ENCODE measurements at regions of chr9 and their contacts with region 1.

Region 1: GRCh38 chr9:121992571-121993212 is 100.4 kb downstream of the TTLL11 start:
- DNase-seq: peak; percentile 43 to 55
- H3K4me3 ChIP-seq: no peak overlapping the region
- H3K4me3 Mint-ChIP-seq: no peak overlapping the region
- H3K27ac Mint-ChIP-seq: no peak overlapping the region
- H3K4me1 ChIP-seq: no peaks in the 10 kb centered on the region
- H3K4me1 Mint-ChIP-seq: no peaks in the 10 kb centered on the region
- H3K27me3 ChIP-seq: no peaks in the 10 kb centered on the region
- H3K27me3 Mint-ChIP-seq: no peaks in the 10 kb centered on the region
- CTCF ChIP-seq: peak; percentile 75

Region 2: DNA sequence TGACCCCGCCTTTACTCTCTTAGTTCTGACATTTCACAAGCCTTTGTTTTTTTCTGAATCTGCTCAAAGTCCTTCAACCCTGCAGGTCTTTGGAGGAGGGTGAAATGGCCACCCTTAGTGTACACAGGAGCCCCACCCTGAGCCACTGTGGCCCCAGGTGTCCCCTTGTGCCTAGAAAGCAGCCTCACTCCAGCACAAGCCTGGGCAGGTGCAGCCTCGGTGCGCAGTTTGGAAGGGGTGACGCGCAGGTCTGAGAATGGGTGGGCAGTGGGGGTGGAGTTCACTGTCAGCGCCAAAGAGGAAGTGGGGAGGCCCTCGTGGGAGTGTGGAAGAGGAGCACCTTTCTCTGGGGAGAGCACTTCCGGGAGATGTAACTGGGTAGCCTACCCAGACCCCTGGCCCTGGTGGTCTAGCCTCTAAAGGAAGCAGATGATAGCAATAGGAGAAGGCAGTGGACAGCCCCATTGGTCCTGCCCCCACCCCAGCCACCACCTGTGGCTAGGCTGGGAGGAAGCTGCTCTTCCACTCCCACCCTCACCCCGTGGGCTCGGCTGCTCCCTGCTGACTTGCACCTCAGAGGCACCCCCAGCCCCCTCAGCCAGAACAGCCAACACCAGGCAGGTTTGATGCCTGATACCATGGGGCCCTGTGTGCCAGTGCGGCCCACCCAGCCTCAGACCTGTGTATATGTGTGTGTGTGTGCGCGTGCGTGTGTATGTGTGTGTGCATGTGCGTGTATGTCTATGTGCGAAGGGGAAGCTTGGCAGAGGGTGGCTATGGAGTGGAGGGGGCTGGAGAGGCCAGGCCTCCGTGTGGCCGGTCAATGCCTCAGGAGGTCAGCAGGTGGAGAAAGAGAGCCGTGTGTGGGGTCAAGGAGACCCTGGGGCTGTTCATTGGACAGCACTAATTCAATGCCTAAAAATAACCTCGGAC is 358.1 kb before region 1 on chr9:
- CTCF ChIA-PET with region 1: no interaction called
- POLR2A ChIA-PET with region 1: no interaction called
- intact Hi-C with region 1: loop called (anchors 1 kb)
- DNase-seq: peak; percentile 72 to 74
- H3K4me3 ChIP-seq: no peak overlapping the region
- H3K4me3 Mint-ChIP-seq: no peak overlapping the region
- H3K27ac Mint-ChIP-seq: no peak overlapping the region
- H3K4me1 ChIP-seq: peaks cover 12% of the 10 kb centered on the region
- H3K4me1 Mint-ChIP-seq: peaks cover 5% of the 10 kb centered on the region
- H3K27me3 ChIP-seq: no peaks in the 10 kb centered on the region
- H3K27me3 Mint-ChIP-seq: no peaks in the 10 kb centered on the region
- CTCF ChIP-seq: peak; percentile 79 to 87

Region 3: DNA sequence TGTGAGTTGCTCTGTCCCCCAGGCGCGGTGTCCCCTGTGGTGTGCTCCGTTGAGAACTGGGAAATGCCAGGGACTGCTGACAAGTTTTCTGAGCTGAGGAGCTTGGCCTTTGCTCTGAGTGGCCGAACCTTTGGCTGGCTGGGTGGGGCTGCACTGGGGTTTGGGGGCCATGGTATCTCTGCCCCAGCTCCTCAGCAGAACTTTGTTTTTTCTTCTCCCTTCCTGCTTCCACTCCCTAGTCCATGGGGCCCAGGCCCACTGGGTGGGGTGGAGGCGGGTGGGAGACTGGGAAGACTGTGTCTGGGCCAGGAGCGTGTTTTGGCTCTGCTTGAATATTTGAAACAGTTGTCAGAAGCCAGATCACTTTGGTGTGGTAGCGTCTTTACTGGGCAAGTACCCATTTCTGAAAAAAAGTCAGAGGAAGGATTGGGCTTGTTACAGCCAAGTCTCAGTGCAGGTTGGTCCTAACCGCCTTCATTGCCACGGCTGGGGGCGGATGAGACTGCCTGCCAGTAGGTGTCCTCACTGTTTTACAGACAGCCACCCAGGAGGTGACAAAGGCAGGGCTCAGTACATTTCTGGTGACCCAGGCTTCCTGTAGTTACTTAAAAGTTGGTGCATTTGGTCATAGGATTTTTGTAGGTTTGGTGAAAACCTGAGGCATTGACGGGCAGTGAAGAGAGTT is 248.5 kb before region 1 on chr9:
- CTCF ChIA-PET with region 1: interaction called, 4 read pairs
- POLR2A ChIA-PET with region 1: no interaction called
- intact Hi-C with region 1: loop called (anchors 1 kb)
- DNase-seq: peak; percentile 71 to 76
- H3K4me3 ChIP-seq: peak overlapping the region; percentile 32
- H3K4me3 Mint-ChIP-seq: no peak overlapping the region
- H3K27ac Mint-ChIP-seq: no peak overlapping the region
- H3K4me1 ChIP-seq: peaks cover 26% of the 10 kb centered on the region
- H3K4me1 Mint-ChIP-seq: peaks cover 5% of the 10 kb centered on the region
- H3K27me3 ChIP-seq: no peaks in the 10 kb centered on the region
- H3K27me3 Mint-ChIP-seq: no peaks in the 10 kb centered on the region
- CTCF ChIP-seq: peak; percentile 57 to 81

Region 4: DNA sequence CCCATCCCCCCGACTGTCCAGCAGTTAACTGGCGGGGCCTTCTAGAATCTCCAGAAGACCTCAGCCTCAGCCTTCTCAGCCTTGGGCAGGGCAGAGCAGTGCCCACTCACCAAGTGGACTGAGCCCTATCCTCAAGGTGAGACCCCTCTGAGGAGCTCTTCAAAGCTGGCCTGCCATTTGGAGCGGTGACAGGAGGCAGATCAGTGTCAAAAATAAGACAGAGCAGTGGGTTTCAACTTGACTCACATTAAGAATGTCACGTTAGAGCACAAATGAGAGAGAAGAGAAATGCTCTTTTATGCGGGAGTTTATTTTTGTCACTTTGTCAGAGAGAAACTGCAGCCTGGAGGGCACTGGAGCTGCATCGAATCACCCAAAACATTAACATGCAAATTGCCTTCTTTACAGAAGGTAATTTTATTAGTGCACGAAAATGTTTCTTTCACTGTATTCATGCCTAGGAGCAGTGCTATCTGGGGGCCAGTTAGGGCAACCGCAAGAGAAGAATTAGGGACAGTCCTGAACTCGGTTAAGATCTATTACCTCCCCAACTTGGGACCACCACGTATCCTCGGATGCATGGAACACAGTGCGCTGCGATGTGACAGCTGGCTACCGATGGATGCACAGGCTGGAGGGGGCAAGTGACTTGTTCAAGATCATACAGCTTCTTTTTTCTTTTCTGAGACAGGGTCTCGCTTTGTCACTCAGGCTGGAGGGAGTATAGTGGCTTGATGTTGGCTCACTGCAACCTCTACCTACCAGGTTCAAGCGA is 152.8 kb before region 1 on chr9:
- CTCF ChIA-PET with region 1: interaction called, 3 read pairs
- POLR2A ChIA-PET with region 1: no interaction called
- intact Hi-C with region 1: loop called (anchors 1 kb)
- DNase-seq: no peak
- H3K4me3 ChIP-seq: no peak overlapping the region
- H3K4me3 Mint-ChIP-seq: no peak overlapping the region
- H3K27ac Mint-ChIP-seq: no peak overlapping the region
- H3K4me1 ChIP-seq: peaks cover 8% of the 10 kb centered on the region; the same call in 1 of the 2 replicates
- H3K4me1 Mint-ChIP-seq: no peaks in the 10 kb centered on the region
- H3K27me3 ChIP-seq: no peaks in the 10 kb centered on the region
- H3K27me3 Mint-ChIP-seq: peaks cover 5% of the 10 kb centered on the region
- CTCF ChIP-seq: no peak

Region 5: DNA sequence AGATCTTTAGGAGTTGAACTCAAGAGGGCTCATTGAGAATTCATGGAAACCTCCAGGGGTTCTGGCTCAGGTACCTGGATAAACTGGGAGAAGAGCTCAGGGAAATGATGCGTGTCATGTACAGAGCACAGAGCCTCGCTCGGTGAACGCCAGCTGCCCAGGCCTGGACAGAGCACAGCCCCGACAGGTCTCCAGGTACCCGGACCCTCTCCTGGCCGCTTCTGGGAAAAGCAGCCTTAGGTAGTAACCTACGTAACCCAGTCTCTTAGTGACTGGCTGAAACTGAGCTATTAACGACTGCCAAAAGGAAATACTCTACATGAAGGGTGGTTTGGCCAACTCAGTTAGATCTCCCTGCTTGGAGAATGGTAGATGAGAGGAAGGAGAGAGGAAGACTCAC is 57.0 kb before region 1 on chr9:
- CTCF ChIA-PET with region 1: no interaction called
- POLR2A ChIA-PET with region 1: no interaction called
- intact Hi-C with region 1: loop called (anchors 5 kb)
- DNase-seq: peak in 1 of 2 experiments; percentile 24
- H3K4me3 ChIP-seq: no peak overlapping the region
- H3K4me3 Mint-ChIP-seq: no peak overlapping the region
- H3K27ac Mint-ChIP-seq: no peak overlapping the region
- H3K4me1 ChIP-seq: no peaks in the 10 kb centered on the region
- H3K4me1 Mint-ChIP-seq: no peaks in the 10 kb centered on the region
- H3K27me3 ChIP-seq: peaks cover 1% of the 10 kb centered on the region; the same call in 1 of the 2 replicates
- H3K27me3 Mint-ChIP-seq: peaks cover 9% of the 10 kb centered on the region
- CTCF ChIP-seq: peak in 1 of 2 experiments; percentile 22

Measured in Caco-2 (cell line).